ENCODE measurements at regions of chr5 and their contacts with region 1.

Region 1: DNA sequence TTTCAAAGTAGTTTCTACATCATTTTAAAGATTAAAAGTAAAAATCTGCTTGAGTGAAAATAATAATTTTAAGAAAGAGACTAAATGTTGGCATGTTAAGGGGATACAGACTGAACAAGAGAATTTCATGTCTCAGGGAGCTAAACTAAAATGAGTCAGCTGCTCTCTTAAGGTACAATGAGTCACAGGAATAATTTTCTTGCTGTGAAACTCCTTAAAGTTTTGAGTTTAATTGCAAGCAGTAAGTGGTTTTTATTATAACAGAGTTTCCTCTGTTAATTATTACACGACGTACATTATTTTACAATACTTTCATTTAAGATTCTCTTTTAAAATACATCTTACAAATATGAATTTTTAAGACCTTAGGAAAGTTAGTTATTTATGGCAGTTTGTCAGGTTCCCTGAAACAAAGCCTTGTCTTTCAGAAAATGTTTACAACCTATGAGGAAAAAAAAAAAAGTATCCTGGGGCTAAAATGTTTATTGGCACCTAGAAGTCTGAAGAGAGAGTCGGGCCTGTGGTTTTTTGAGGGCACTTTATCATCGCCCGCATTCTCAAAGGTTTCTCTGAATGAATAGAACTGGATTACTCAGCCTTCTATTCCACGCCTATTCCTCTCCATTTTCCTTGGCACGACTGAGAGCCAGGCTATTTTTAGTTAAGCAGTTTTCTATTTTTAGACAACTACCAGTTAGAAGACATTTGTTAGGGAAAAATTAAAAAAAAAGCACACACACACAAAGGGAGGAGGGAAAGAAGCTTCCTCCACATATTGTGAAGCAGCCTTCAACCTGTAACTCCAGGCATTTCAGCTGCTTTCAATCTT is 97.4 kb downstream of the MEF2C start:
- DNase-seq: peak; percentile 60
- H3K4me3 Mint-ChIP-seq: peak overlapping the region; percentile 57
- H3K27ac Mint-ChIP-seq: peak overlapping the region; percentile 92
- H3K4me1 Mint-ChIP-seq: peaks cover 36% of the 10 kb centered on the region
- H3K27me3 Mint-ChIP-seq: no peaks in the 10 kb centered on the region
- CTCF ChIP-seq: no peak

Region 2: DNA sequence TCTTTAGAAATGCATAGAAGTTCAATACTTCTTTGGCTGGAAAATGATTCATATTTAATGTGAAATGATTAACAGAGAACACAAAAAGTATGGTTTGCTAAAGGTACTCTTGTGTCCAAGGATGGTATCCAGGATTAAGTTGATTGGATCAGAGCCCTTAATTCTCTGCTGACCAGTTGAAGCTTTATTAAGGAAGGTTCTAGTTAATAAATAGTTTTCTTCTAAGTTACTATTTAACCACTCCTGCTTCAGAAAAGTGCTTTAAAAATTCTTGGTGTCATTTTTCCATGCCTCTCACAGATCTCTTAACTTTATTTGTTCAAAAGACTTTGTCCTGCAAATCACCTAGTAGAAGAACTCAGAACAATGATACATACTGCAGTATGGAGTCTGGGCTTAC is 36.9 kb before region 1 on chr5:
- CTCF ChIA-PET with region 1: no interaction called
- intact Hi-C with region 1: loop called (anchors 2 kb)
- DNase-seq: no peak
- H3K4me3 Mint-ChIP-seq: peak overlapping the region; percentile 22
- H3K27ac Mint-ChIP-seq: no peak overlapping the region
- H3K4me1 Mint-ChIP-seq: peaks cover 18% of the 10 kb centered on the region
- H3K27me3 Mint-ChIP-seq: no peaks in the 10 kb centered on the region
- CTCF ChIP-seq: no peak

Region 3: DNA sequence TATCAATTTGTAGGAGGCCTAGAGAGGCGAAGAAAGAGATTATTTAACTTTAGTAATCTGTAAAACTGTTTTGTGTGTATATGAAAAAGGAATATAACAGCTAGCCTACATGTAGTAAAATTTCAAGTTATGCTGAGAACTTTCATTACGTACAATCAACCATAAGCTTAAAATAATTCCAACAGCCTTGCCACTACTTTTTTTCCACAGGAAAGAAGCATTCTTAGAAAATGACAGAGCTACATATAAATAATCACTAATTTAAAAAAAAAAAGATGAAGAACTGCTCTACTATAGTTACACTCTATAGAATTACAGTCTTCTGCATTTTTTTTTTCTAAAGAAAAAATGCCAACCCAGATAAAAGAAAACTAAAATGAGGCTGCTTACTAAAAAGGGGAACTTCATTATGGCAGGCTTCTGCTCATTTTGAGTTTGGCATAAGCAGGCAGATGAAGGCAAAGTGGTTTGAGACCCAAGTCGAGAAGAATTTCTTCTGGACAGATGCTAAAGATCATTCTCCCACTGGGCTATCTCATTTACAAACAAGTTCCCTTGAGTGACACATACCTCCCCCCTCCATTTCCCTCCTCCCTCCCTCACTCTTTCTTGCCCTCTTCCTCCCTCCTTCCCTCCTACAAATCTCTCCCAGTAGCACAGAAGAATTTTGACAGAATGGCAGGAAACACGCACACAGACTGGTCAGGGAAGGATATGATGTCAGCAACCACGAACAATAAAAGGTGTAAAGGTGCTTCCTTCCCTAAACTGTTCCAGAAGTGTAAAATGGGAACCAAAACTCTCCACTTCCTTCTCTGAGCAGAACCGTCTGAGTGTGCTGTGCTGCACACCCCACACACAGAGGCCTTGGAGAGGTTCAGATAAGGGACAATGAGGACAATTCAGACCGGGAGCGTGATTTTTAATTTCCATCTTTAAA is 41.3 kb after region 1 on chr5:
- CTCF ChIA-PET with region 1: no interaction called
- intact Hi-C with region 1: loop called (anchors 5 kb)
- DNase-seq: peak; percentile 13
- H3K4me3 Mint-ChIP-seq: peak overlapping the region; percentile 43
- H3K27ac Mint-ChIP-seq: no peak overlapping the region
- H3K4me1 Mint-ChIP-seq: peaks cover 39% of the 10 kb centered on the region
- H3K27me3 Mint-ChIP-seq: no peaks in the 10 kb centered on the region
- CTCF ChIP-seq: no peak

Region 4: DNA sequence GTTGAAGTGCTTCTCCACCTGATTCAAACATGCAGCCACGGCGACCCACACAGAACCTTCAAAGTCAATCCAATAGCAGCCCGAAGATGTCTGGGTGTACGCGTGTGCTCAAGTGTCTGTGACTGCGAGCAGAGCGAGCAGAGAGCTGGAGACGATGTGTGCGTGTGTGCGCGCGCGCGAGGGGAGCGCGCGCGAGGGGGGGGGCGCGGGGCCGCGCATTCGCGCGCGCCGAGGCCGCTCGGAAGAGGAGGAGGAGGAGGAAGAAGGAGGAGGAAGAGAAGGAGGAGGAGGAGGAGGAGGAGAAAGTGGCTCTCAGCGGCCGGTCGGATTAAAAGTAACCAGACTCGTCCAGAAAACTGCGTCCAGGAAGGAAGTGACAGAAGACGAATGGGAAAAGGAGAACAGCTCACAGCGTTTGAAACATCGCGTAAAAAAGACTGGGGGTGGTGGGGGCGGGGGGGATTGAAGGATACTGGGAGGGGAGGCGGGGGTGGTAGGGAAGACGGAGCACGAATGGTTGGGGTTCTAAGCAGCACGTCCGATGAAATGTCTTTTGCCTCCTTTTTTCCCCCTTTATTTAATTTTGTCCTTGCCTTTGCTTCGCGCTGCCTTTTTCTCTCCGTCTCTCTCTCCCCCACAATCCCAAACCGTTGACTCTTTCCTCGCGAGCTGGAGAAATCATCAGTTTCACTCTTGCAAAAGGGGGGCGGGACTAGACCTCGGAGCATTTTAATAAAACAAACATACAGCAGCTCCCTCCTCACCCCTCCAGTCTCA is 97.6 kb after region 1 on chr5 and contains the start of gene MEF2C:
- CTCF ChIA-PET with region 1: interaction called, 3 read pairs
- intact Hi-C with region 1: loop called (anchors 2 kb)
- DNase-seq: peak; percentile 51
- H3K4me3 Mint-ChIP-seq: peak within 1 kb of the TSS; percentile 93
- H3K27ac Mint-ChIP-seq: peak within 1 kb of the TSS; percentile 70
- H3K4me1 Mint-ChIP-seq: peaks cover under 1% of the 10 kb centered on the region
- H3K27me3 Mint-ChIP-seq: no peaks in the 10 kb centered on the region
- CTCF ChIP-seq: no peak
- total RNA-seq, gene MEF2C: 6.1 and 6.5 TPM in 2 replicates

Region 5: GRCh38 chr5:89003563-89004036 is 218.0 kb after region 1 on chr5:
- CTCF ChIA-PET with region 1: no interaction called
- intact Hi-C with region 1: no loop called
- DNase-seq: no peak
- H3K4me3 Mint-ChIP-seq: no peak overlapping the region
- H3K27ac Mint-ChIP-seq: no peak overlapping the region
- H3K4me1 Mint-ChIP-seq: no peaks in the 10 kb centered on the region
- H3K27me3 Mint-ChIP-seq: no peaks in the 10 kb centered on the region
- CTCF ChIP-seq: no peak

Region 6: DNA sequence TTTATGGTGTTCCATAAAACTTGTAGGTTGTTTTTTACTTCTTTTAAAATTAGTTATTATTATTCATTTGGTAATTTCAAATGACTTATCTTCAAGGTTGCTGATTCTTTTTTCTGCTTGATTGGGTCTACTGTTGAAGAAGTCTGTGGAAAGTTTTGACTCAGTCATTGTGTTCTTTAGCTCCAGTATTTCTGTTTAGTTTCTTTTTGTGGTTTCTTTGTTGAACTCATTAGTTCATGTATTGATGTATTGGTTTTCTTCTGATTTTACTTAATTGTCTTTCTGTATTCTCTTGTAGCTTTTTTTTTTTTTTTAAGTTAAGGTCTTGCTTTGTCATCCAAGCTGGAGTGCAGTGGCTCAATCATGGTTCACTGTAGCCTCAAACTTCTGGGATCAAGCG is 442.8 kb after region 1 on chr5:
- CTCF ChIA-PET with region 1: no interaction called
- intact Hi-C with region 1: no loop called
- DNase-seq: no peak
- H3K4me3 Mint-ChIP-seq: no peak overlapping the region
- H3K27ac Mint-ChIP-seq: no peak overlapping the region
- H3K4me1 Mint-ChIP-seq: no peaks in the 10 kb centered on the region
- H3K27me3 Mint-ChIP-seq: no peaks in the 10 kb centered on the region
- CTCF ChIP-seq: no peak